ENCODE measurements at regions of chr16 and their contacts with region 1.

Region 1: DNA sequence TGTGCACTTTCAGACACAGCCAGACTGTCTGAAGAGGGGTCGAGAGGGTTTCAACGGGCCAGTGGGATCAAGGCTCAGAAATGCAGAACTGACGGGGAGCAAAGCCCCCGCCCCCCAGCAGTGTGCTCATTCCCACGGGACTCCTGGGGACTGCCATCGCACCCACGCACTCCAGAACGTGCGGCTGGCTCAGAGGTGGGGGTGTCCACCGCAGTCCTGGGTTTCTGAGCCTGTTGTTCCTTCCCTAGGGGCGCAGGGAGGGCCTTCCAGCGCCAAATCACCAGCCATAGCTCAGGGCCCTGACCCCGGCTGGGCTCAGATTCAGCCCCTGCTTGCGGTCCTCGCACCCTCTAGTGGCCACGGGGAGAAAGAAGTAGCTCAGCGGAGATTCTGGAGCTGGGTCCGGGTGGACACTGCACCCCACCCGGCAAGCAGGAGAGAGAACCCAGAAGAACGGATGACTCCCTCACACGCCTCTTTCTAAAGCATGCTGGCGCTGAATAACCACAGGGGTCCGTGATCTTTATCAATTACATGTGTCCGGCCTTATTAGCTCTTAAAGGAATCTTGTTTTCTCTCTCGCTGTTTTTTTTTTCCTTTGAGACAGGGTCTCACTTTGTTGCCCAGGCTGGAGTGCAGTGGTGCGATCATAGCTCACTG is 45.0 kb upstream of the USP7 start:
- DNase-seq: peak; percentile 71 to 82 (median 77)
- ATAC-seq: peak; percentile 80 to 96 (median 93)
- H3K4me3 ChIP-seq: peak overlapping the region in 11 of 12 donors; percentile 15 to 51 (median 36)
- H3K27ac ChIP-seq: no peak overlapping the region
- H3K4me1 ChIP-seq: peaks cover 0 to 14% (median 6%) of the 10 kb centered on the region in 12 donors
- H3K27me3 ChIP-seq: peaks cover 0 to 7% (median 0%) of the 10 kb centered on the region in 9 donors
- CTCF ChIP-seq: peak; percentile 74 to 90 (median 82)
- POLR2A ChIP-seq: no peak

Region 2: DNA sequence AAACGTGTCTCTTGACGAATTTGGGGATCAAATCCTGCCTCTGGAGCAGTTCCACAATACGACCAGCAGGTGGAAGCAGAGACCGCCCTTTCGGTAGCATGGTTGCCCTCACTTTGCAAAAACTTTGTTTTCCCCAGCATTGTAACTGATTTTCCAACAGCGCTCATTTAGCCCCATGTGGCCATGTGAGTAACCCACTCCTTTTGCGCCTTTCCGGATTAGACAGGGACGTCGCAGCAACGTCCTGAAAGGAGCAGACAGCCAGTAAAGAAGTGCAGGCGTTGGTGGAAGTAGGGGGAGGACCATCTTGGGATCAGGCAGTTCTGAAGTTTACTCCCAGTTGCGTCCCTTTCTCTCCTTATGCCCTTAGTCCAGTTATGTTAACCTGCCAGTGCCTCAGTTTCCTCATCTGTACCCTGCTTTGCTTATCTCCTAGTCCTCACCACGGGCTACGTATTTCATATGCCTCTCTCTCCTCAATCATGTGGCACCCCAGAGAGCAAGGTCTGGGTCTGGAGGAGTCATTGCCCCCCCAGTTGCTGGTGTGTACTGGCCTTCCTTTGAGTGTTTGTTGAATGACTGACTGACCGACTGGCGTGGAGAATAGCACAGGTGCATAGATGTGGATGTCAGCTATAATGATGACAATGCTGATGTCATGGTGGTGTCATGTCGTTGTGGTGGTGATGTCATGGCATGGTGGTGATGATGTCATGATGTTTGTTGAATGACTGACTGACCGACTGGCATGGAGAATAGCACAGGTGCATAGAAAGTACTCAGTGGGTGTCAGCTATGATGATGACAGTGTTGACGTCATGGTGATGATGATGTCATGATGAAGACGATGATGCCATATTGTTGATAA is 440.7 kb before region 1 on chr16:
- intact Hi-C with region 1: loop called in 3 of 10 experiments (anchors 5 to 10 kb)
- DNase-seq: peak; percentile 53 to 74 (median 65)
- ATAC-seq: peak in 3 of 4 donors; percentile 77 to 88 (median 84)
- H3K4me3 ChIP-seq: no peak overlapping the region
- H3K27ac ChIP-seq: no peak overlapping the region
- H3K4me1 ChIP-seq: peaks cover 0 to 12% (median 0%) of the 10 kb centered on the region in 12 donors
- H3K27me3 ChIP-seq: peaks cover 0 to 7% (median 0%) of the 10 kb centered on the region in 9 donors
- CTCF ChIP-seq: peak; percentile 92 to 98 (median 97)
- POLR2A ChIP-seq: no peak

Region 3: DNA sequence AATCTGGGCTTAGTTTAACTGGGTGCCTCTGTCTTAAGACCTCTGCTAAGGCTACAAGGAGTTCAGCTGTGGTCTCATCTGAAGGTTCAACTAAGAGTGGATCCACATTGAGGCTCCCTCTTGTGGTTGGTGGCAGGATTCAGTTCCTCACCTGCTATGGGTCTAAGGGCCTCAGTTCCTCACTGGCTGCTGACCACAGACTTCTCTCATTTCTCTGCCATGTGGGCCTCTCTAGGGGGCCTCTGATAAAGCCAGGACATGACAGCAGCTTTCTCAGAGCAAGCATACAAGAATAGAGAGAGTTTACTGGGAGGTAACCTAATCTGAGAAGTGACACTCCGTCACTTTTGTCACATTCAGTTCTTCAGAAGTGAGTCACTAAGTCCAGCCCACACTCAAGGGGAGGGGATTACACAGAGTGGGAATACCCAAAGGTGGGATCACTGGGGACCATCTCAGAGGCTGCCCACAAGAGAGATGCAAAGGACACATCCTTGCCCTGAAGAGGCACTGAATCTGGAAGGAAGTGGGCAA is 353.5 kb before region 1 on chr16:
- intact Hi-C with region 1: loop called in 5 of 10 experiments (anchors 5 to 10 kb)
- DNase-seq: no peak
- ATAC-seq: peak in 1 of 4 donors; percentile 45
- H3K4me3 ChIP-seq: no peak overlapping the region
- H3K27ac ChIP-seq: no peak overlapping the region
- H3K4me1 ChIP-seq: no peaks in the 10 kb centered on the region
- H3K27me3 ChIP-seq: no peaks in the 10 kb centered on the region
- CTCF ChIP-seq: peak in 6 of 12 donors; percentile 8 to 33 (median 19)
- POLR2A ChIP-seq: no peak

Region 4: GRCh38 chr16:8905168-8905762 is 103.5 kb before region 1 on chr16:
- intact Hi-C with region 1: loop called in 6 of 10 experiments (anchors 5 to 10 kb)
- DNase-seq: no peak
- ATAC-seq: peak in 1 of 4 donors; percentile 42
- H3K4me3 ChIP-seq: no peak overlapping the region
- H3K27ac ChIP-seq: no peak overlapping the region
- H3K4me1 ChIP-seq: peaks cover 0 to 7% (median 0%) of the 10 kb centered on the region in 12 donors
- H3K27me3 ChIP-seq: no peaks in the 10 kb centered on the region
- CTCF ChIP-seq: peak in 8 of 12 donors; percentile 9 to 43 (median 20)
- POLR2A ChIP-seq: no peak

Region 5: DNA sequence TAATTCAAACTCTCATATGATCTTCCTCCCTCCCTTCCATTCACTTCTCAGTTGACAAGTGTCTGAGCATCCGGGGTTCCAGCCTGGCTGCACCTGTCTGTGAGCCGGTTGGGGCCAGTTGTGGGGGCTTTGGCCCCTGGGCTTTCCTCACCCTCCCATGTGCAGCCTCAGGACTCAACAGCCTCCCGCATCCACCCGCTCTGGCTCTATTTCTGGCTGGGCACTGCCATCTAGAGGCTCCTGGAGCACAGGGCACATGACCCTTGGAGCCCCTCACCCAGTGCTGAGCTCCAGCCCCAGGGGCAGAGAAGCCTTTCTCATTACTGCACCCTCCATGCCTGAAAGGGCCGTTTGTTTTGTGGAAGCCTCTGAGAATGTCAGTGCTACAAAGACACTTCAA is 126.0 kb after region 1 on chr16:
- intact Hi-C with region 1: loop called in 1 of 10 experiments (anchors 5 kb)
- DNase-seq: peak; percentile 26 to 75 (median 50)
- ATAC-seq: peak in 3 of 4 donors; percentile 63 to 72 (median 70)
- H3K4me3 ChIP-seq: no peak overlapping the region
- H3K27ac ChIP-seq: no peak overlapping the region
- H3K4me1 ChIP-seq: peaks cover 0 to 21% (median 6%) of the 10 kb centered on the region in 12 donors
- H3K27me3 ChIP-seq: no peaks in the 10 kb centered on the region
- CTCF ChIP-seq: peak; percentile 12 to 60 (median 47)
- POLR2A ChIP-seq: no peak